ENCODE measurements at regions of chr2 and their contacts with region 1.

Region 1: GRCh38 chr2:167964650-167965413 is 282.6 kb downstream of the STK39 start:
- DNase-seq: no peak
- H3K4me3 ChIP-seq: no peak overlapping the region
- H3K27ac ChIP-seq: no peak overlapping the region
- H3K4me1 ChIP-seq: no peaks in the 10 kb centered on the region
- H3K27me3 ChIP-seq: no peaks in the 10 kb centered on the region
- CTCF ChIP-seq: peak in 1 of 3 experiments; percentile 10

Region 2: GRCh38 chr2:168118733-168119514 is 154.1 kb after region 1 on chr2:
- intact Hi-C with region 1: loop called (anchors 5 kb)
- DNase-seq: no peak
- H3K4me3 ChIP-seq: no peak overlapping the region
- H3K27ac ChIP-seq: no peak overlapping the region
- H3K4me1 ChIP-seq: no peaks in the 10 kb centered on the region
- H3K27me3 ChIP-seq: no peaks in the 10 kb centered on the region
- CTCF ChIP-seq: peak; percentile 29 to 69 (median 60)

Measured in ascending aorta (tissue), 2 donors.